Heart left ventricle (tissue), 16 donors: ENCODE measurements at regions of chr1 and their contacts with region 1.

Region 1: GRCh38 chr1:154479764-154480421 is 22.1 kb upstream of the TDRD10 start:
- DNase-seq: peak in 4 of 5 donors; percentile 42 to 70 (median 56)
- ATAC-seq: peak; percentile 60 to 93 (median 91)
- H3K4me3 ChIP-seq: no peak overlapping the region
- H3K27ac ChIP-seq: peak overlapping the region in 5 of 12 donors; percentile 2 to 53 (median 11)
- H3K4me1 ChIP-seq: peaks cover 3 to 46% (median 10%) of the 10 kb centered on the region in 12 donors
- H3K27me3 ChIP-seq: no peaks in the 10 kb centered on the region
- CTCF ChIP-seq: peak; percentile 87 to 97 (median 95)
- POLR2A ChIP-seq: no peak

Region 2: DNA sequence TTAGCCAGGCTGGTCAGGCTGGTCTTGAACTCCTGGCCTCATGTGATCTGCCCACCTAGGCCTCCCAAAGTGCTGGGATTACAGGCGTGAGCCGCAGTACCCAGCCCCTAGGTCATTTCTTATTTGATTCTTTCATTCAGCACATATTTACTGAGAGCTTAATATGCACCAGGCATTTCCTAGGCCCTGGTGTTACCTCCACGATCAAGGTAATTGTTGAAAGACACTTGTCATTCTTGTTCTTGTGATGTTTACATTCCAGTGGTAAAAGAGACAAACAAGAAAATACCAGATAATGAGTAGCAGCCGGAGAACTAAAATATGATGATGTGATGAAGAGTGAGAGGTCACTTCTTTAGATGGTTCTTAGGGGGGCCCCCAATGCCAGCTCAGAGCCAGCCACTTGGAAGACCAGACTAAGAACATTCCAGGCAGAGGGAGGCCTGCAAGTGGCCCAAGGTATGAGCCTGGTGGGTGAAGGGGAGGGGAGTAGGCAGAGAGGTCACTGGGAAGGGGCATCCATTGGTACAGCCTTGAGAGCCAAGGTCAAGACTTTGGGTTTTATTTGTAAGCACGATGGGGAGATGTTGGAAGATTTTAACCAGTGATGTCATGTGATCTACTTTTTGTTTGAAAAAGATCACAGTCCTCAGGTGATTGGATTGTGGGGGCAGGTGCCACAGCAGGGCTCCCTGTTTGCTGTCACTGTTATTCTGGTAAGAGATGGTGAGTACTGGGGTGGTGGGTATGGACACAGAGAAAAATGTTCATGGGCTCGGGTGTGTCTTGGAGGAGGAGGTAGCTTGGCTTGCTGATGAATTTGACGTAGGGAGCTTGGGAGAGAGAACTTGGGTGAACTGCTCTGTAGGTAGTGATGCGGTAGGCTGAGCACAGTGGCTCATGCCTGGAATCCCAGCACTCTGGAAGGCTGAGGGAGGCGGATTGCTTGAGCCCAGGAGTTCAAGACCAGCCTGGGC is 59.9 kb after region 1 on chr1:
- intact Hi-C with region 1: loop called in 2 of 10 experiments (anchors 2 to 5 kb)
- DNase-seq: no peak
- ATAC-seq: no peak
- H3K4me3 ChIP-seq: no peak overlapping the region
- H3K27ac ChIP-seq: no peak overlapping the region
- H3K4me1 ChIP-seq: peaks cover 0 to 4% (median 0%) of the 10 kb centered on the region in 12 donors
- H3K27me3 ChIP-seq: no peaks in the 10 kb centered on the region
- CTCF ChIP-seq: no peak
- POLR2A ChIP-seq: no peak

Region 3: GRCh38 chr1:154669464-154670282 is 189.8 kb after region 1 on chr1:
- intact Hi-C with region 1: loop called in 1 of 10 experiments (anchors 5 kb)
- DNase-seq: peak; percentile 73 to 79 (median 76)
- ATAC-seq: peak; percentile 93 to 100 (median 98)
- H3K4me3 ChIP-seq: no peak overlapping the region
- H3K27ac ChIP-seq: no peak overlapping the region
- H3K4me1 ChIP-seq: peaks cover 0 to 3% (median 0%) of the 10 kb centered on the region in 12 donors
- H3K27me3 ChIP-seq: no peaks in the 10 kb centered on the region
- CTCF ChIP-seq: peak; percentile 69 to 90 (median 80)
- POLR2A ChIP-seq: no peak

Region 4: DNA sequence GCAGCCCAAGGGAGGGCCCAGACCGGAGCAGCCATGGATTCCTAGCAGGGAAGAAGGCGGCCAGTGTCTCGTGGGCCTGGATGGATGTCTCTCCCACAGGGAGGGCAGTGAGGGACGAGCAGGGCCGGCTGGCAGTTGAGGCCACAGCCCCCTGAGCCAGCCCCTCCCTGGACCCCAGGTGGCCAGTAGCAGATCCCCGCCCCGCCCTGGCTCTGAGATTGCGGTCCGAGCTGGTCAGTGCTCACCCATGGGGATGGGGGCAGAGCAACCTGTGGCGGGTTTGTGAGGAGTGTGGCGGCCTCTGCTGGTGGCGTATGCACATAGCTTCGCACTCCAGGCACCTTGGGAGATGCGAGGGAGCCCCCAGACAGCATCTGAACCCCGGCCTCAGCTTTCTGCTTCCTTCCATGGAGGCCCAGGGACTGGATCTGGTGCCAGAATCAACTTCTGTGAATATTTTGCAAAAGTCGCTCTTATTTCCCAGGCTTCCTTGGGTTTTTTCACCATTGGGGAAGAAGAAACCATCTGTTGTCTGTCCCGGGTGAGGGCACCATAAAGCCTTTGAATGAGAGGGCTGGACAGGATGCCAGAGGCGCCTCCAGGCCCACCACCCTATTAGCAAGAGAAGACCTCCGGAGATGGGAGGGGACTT is 398.6 kb after region 1 on chr1:
- intact Hi-C with region 1: loop called in 5 of 10 experiments (anchors 5 to 10 kb)
- DNase-seq: peak; percentile 77 to 88 (median 80)
- ATAC-seq: peak; percentile 84 to 96 (median 94)
- H3K4me3 ChIP-seq: no peak overlapping the region
- H3K27ac ChIP-seq: no peak overlapping the region
- H3K4me1 ChIP-seq: peaks cover 0 to 4% (median 0%) of the 10 kb centered on the region in 12 donors
- H3K27me3 ChIP-seq: no peaks in the 10 kb centered on the region
- CTCF ChIP-seq: peak; percentile 70 to 92 (median 86)
- POLR2A ChIP-seq: no peak